Esophagus squamous epithelium (tissue), 5 donors: ENCODE measurements at regions of chr1 and their contacts with region 1.

Region 1: DNA sequence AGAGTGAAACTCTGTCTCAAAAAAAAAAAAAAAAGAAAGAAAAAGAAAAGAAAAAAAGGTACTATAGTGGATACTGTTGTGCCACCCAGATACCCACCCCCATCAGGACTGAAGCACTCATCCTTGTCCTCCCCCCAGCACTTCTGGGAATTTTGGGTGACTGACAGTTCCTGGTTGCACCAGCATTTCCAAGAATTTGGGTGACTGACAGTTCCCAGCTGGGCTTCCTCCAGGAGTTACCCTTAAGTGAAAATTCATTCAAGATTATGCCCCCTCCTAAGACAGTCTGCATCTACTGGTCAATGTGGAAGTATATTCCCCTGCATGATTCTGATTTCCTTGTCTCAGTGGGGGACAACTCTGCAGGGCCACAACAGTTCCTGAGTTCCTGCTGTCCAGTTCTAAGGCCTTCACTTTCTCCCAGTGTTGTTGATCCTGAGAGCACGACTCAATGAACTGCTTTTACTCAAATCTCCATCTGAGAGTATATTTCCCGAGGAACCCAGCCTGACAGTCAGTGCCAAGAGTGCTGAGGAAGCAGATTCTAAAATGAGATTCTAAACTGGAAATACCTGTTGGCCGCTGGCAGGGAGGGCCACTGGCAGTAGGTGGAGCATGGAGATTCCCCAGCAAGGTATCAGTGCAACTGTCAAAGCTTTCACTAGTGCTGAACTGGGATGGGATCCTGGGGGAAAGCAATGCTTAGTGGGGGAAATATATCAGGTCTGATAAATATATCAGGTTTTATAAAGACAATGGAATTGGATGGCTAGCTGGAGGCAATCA is 18.5 kb downstream of the RIIAD1 start:
- DNase-seq: no peak
- H3K4me3 ChIP-seq: no peak overlapping the region
- H3K27ac ChIP-seq: peak overlapping the region in 3 of 4 donors; percentile 64 to 69 (median 64)
- H3K4me1 ChIP-seq: peaks cover 0 to 26% (median 0%) of the 10 kb centered on the region in 3 donors
- H3K27me3 ChIP-seq: no peaks in the 10 kb centered on the region
- CTCF ChIP-seq: peak in 2 of 6 experiments; percentile 21 to 26
- POLR2A ChIP-seq: no peak

Region 2: GRCh38 chr1:151443846-151444782 is 295.7 kb before region 1 on chr1:
- intact Hi-C with region 1: loop called (anchors 10 kb)
- DNase-seq: no peak
- H3K4me3 ChIP-seq: no peak overlapping the region
- H3K27ac ChIP-seq: peak overlapping the region in 2 of 4 donors; percentile 34 to 43
- H3K4me1 ChIP-seq: peaks cover 0 to 51% (median 20%) of the 10 kb centered on the region in 3 donors
- H3K27me3 ChIP-seq: no peaks in the 10 kb centered on the region
- CTCF ChIP-seq: peak; percentile 70 to 85 (median 76)
- POLR2A ChIP-seq: no peak

Region 3: DNA sequence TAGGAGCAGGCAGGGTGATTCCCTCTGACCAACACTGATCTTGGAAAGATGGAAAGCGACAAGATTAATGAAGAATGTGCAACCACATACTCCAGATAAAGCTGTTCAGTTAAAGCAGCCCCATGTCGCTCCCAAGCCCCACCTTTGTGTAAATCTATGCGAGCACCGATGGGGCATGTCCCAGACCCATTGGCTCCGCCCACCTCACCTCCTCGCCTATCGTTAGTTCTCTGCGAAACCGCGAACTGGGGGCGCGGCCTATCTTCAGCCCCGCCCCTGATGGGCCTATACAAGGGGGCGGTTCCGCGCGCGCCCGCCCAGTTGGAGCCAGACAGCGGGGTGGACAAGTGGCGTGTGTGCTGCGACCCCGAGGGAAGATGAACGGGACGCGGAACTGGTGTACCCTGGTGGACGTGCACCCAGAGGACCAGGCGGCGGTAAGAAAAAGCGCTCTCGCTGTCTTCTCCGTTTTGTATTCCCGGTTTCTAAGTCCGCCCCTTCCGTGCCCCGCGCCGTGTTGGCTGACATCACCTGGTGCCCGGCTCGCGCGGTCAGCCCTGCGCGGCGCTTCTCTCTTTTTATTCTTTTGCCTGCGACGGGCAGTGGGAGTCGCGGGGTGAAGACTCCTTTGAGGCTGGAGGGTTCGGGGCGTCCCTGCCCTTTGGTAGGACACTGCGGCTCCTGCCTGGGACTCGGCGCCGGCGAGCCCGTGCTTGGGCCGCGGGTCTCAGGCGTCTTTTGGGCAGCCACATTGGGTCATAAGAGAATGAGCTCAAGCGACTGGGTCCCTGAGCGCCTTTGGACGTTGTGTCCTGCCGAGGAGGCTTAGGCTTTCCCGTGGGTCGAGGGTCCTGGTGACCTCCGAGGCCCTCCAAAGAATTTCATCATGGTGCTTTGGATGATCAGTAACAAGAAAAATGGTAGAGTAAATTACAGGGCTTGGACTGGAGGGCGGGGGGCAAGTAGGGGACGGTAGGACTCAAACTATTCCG is 199.5 kb before region 1 on chr1 and contains the start of gene TUFT1:
- intact Hi-C with region 1: loop called (anchors 10 kb)
- DNase-seq: peak; percentile 78
- H3K4me3 ChIP-seq: peak within 1 kb of the TSS; percentile 72 to 92 (median 76)
- H3K27ac ChIP-seq: peak within 1 kb of the TSS; percentile 91 to 95 (median 92)
- H3K4me1 ChIP-seq: peaks cover 12 to 57% (median 19%) of the 10 kb centered on the region in 3 donors
- H3K27me3 ChIP-seq: no peaks in the 10 kb centered on the region
- CTCF ChIP-seq: peak in 2 of 6 experiments; percentile 4
- POLR2A ChIP-seq: peak in 3 of 4 donors; percentile 84 to 94 (median 88)
- total RNA-seq, gene TUFT1: 18.1 to 41.8 (median 32.8) TPM

Region 4: GRCh38 chr1:151693076-151693651 is 46.6 kb before region 1 on chr1:
- intact Hi-C with region 1: no loop called
- DNase-seq: no peak
- H3K4me3 ChIP-seq: no peak overlapping the region
- H3K27ac ChIP-seq: no peak overlapping the region
- H3K4me1 ChIP-seq: no peaks in the 10 kb centered on the region
- H3K27me3 ChIP-seq: no peaks in the 10 kb centered on the region
- CTCF ChIP-seq: peak in 5 of 6 experiments; percentile 24 to 59 (median 38)
- POLR2A ChIP-seq: no peak

Region 5: DNA sequence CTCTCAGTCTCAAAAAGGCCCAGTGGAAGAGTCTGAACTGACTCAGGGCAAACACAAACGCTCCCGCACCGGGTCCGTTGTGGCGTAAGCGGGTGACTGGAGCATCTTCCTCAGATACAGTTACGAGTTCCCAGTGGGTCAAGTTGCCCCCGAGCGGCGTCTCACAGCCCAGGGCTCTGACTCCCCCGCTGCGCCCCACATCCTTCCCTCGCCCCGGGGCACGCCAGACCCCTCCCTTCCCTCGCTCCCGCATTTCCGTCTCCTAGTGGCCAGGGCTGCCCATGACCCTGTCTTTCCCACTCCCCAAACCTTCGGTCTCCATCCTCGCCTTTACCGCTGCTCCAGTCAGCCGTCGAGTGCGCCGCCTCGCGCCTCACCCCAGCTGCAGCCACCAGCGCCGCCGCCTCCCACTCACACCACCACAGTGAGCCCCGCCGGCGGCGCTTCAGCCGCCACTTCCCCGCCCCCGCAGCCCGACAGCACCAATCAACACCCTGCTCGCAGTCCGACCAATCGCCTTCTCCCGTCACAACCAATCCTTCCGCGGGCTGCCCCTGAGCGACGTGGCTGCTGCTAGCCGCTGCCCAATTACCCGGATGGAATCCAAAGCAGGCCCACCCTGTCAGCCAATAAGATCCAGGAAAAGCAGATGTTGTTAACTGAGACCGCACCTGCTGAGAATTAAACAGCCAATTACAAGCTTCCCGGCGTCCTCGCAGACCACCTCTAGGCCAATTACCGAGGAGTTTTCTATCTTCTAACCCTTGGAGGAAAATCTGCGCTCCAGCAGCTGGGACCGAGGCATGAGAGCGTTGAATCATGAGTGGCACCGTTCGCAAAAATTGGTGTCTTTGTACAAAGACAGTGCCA is 50.5 kb after region 1 on chr1 and contains the start of gene TDRKH:
- intact Hi-C with region 1: no loop called
- DNase-seq: peak; percentile 93
- H3K4me3 ChIP-seq: peak within 1 kb of the TSS; percentile 51 to 83 (median 76)
- H3K27ac ChIP-seq: peak within 1 kb of the TSS in 3 of 4 donors; percentile 64 to 67 (median 64)
- H3K4me1 ChIP-seq: peaks cover 4 to 32% (median 10%) of the 10 kb centered on the region in 3 donors
- H3K27me3 ChIP-seq: peaks cover 0 to 5% (median 0%) of the 10 kb centered on the region in 4 donors
- CTCF ChIP-seq: peak in 5 of 6 experiments; percentile 12 to 34 (median 26)
- POLR2A ChIP-seq: peak in 3 of 4 donors; percentile 36 to 65 (median 54)
- total RNA-seq, gene TDRKH: 1.1 to 5.3 (median 2.3) TPM

Region 6: GRCh38 chr1:151867785-151868411 is 128.1 kb after region 1 on chr1:
- intact Hi-C with region 1: no loop called
- DNase-seq: no peak
- H3K4me3 ChIP-seq: no peak overlapping the region
- H3K27ac ChIP-seq: no peak overlapping the region
- H3K4me1 ChIP-seq: peaks cover 0 to 32% (median 0%) of the 10 kb centered on the region in 3 donors
- H3K27me3 ChIP-seq: no peaks in the 10 kb centered on the region
- CTCF ChIP-seq: no peak
- POLR2A ChIP-seq: no peak